ENCODE measurements at regions of chr19 and their contacts with region 1.

Region 1: GRCh38 chr19:28324275-28325060 is 888.5 kb downstream of the UQCRFS1 start:
- DNase-seq: no peak
- H3K4me3 ChIP-seq: no peak overlapping the region
- H3K27ac ChIP-seq: no peak overlapping the region
- H3K4me1 ChIP-seq: no peaks in the 10 kb centered on the region
- H3K27me3 ChIP-seq: no peaks in the 10 kb centered on the region
- CTCF ChIP-seq: no peak

Region 2: GRCh38 chr19:28051047-28051446 is 273.4 kb before region 1 on chr19:
- intact Hi-C with region 1: no loop called
- DNase-seq: no peak
- H3K4me3 ChIP-seq: no peak overlapping the region
- H3K27ac ChIP-seq: no peak overlapping the region
- H3K4me1 ChIP-seq: no peaks in the 10 kb centered on the region
- H3K27me3 ChIP-seq: no peaks in the 10 kb centered on the region
- CTCF ChIP-seq: no peak

Region 3: GRCh38 chr19:28242297-28242927 is 82.1 kb before region 1 on chr19:
- intact Hi-C with region 1: loop called (anchors 5 kb)
- DNase-seq: peak; percentile 43
- H3K4me3 ChIP-seq: no peak overlapping the region
- H3K27ac ChIP-seq: no peak overlapping the region
- H3K4me1 ChIP-seq: no peaks in the 10 kb centered on the region
- H3K27me3 ChIP-seq: no peaks in the 10 kb centered on the region
- CTCF ChIP-seq: peak; percentile 47